Heart right ventricle (tissue), 16 donors: ENCODE measurements at regions of chr16 and their contacts with region 1.

Region 1: GRCh38 chr16:16120382-16121184 is 102.7 kb downstream of the ABCC6 start:
- DNase-seq: peak; percentile 58 to 66
- ATAC-seq: peak; percentile 58 to 87 (median 78)
- H3K4me3 ChIP-seq: no peak overlapping the region
- H3K27ac ChIP-seq: peak overlapping the region in 6 of 10 donors; percentile 2 to 35 (median 18)
- H3K4me1 ChIP-seq: peaks cover 0 to 14% (median 10%) of the 10 kb centered on the region in 9 donors
- H3K27me3 ChIP-seq: no peaks in the 10 kb centered on the region
- CTCF ChIP-seq: no peak

Region 2: DNA sequence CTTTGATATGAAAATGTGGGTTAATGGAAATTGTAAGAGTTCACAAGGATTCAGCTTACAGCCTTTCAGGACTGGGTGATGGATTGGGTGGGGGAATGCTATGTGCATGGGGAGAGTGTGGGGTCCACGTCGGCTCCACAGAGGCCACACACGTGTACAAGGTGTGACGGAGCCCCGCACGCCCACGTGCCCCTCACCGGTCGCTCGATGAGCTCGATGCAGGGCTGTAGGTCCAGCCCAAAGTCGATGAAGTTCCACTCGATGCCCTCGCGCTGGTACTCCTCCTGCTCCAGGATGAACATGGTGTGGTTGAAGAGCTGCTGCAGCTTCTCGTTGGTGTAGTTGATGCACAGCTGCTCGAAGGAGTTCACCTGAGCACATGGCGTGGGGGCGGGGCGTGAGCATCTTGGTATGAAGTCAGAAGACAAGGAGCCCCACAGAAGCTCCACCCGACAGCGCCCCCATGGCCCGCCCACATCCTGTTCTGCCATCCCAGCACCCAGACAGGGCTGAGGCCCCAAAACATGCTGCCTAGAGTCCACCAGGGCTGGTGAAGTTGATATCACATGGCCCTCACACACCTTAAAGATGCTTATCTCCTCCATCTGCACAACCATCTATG is 362.8 kb before region 1 on chr16:
- intact Hi-C with region 1: loop called in 1 of 10 experiments (anchors 5 kb)
- DNase-seq: no peak
- ATAC-seq: no peak
- H3K4me3 ChIP-seq: no peak overlapping the region
- H3K27ac ChIP-seq: no peak overlapping the region
- H3K4me1 ChIP-seq: no peaks in the 10 kb centered on the region
- H3K27me3 ChIP-seq: peaks cover 0 to 16% (median 0%) of the 10 kb centered on the region in 7 donors
- CTCF ChIP-seq: no peak